ENCODE measurements at regions of chr16 and their contacts with region 1.

Region 1: GRCh38 chr16:84765616-84766580 is 53.9 kb upstream of the CRISPLD2 start:
- DNase-seq: no peak
- ATAC-seq: peak in 3 of 8 donors; percentile 17 to 38 (median 34)
- H3K4me3 ChIP-seq: no peak overlapping the region
- H3K27ac ChIP-seq: peak overlapping the region in 1 of 10 donors; percentile 36
- H3K4me1 ChIP-seq: peaks cover 0 to 14% (median 0%) of the 10 kb centered on the region in 9 donors
- H3K27me3 ChIP-seq: no peaks in the 10 kb centered on the region
- CTCF ChIP-seq: no peak

Region 2: GRCh38 chr16:84851192-84852127 is 85.6 kb after region 1 on chr16:
- intact Hi-C with region 1: loop called in 1 of 10 experiments (anchors 10 kb)
- DNase-seq: no peak
- ATAC-seq: peak in 1 of 8 donors; percentile 18
- H3K4me3 ChIP-seq: no peak overlapping the region
- H3K27ac ChIP-seq: no peak overlapping the region
- H3K4me1 ChIP-seq: no peaks in the 10 kb centered on the region
- H3K27me3 ChIP-seq: peaks cover 0 to 4% (median 0%) of the 10 kb centered on the region in 7 donors
- CTCF ChIP-seq: no peak